GM18951 (cell line): ENCODE measurements at regions of chr7 and their contacts with region 1.

Region 1: GRCh38 chr7:25124465-25125136 is 459 bp downstream of the CYCS start:
- POLR2A ChIP-seq: no peak

Region 2: DNA sequence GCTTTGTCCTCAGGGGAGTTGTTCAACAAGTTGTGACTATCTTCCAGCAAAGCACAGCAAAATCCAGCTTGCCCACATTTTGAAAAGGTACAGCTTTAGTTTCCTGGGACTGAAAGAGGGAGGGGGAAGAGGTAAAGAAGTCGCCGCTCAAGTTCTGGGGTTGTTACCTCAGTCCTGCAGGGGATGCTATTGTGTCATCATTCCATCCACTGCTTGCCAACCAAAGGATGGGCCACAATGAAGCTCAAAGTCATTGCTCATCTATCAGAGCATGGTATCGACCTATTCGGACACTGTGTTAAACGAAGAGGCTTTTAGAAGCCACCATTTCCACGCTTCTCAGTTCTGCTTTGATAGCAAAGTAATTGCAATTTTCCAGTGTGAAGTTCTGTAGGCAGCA is 806.3 kb before region 1 on chr7:
- in situ Hi-C with region 1: loop called (anchors 25 kb)
- POLR2A ChIP-seq: no peak